ENCODE measurements at regions of chr6 and their contacts with region 1.

Region 1: DNA sequence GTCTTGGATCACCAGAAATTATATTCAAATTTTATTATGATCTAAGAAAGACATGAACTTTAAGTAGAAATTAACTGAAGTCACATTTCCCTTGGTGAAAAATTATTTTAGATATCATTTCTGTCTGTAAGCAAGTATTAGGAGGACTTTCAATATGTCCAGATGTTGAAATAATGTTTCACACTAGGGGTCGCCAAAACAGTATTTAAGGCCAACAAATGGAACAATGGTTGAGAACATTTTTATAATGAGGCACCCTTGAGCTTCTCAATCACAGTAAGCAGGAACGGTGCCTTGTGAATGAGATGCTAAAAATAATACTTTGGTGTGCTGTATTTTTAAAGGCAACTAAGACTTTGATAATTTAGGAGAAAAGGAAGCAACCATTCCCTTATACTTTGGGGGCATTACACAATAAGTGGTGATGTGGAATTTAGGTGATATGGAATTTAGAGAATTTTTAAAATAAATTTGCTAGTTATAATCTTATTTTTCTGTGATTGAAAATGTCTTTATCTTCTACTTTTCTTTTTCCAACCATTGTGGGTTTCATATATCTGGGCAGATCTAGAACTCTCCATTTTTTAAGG is 9.6 kb upstream of the SF3B5 start:
- H3K4me3 Mint-ChIP-seq: no peak overlapping the region
- H3K27ac Mint-ChIP-seq: no peak overlapping the region
- H3K4me1 Mint-ChIP-seq: no peaks in the 10 kb centered on the region
- H3K27me3 Mint-ChIP-seq: no peaks in the 10 kb centered on the region

Region 2: GRCh38 chr6:144140867-144141266 is 35.9 kb after region 1 on chr6:
- intact Hi-C with region 1: loop called (anchors 5 kb)
- H3K4me3 Mint-ChIP-seq: no peak overlapping the region
- H3K27ac Mint-ChIP-seq: no peak overlapping the region
- H3K4me1 Mint-ChIP-seq: peaks cover 9% of the 10 kb centered on the region
- H3K27me3 Mint-ChIP-seq: no peaks in the 10 kb centered on the region

Region 3: GRCh38 chr6:144215932-144216667 is 111.1 kb after region 1 on chr6:
- intact Hi-C with region 1: loop called (anchors 1 kb)
- H3K4me3 Mint-ChIP-seq: peak overlapping the region; percentile 87
- H3K27ac Mint-ChIP-seq: peak overlapping the region; percentile 93
- H3K4me1 Mint-ChIP-seq: peaks cover 35% of the 10 kb centered on the region
- H3K27me3 Mint-ChIP-seq: no peaks in the 10 kb centered on the region

Region 4: DNA sequence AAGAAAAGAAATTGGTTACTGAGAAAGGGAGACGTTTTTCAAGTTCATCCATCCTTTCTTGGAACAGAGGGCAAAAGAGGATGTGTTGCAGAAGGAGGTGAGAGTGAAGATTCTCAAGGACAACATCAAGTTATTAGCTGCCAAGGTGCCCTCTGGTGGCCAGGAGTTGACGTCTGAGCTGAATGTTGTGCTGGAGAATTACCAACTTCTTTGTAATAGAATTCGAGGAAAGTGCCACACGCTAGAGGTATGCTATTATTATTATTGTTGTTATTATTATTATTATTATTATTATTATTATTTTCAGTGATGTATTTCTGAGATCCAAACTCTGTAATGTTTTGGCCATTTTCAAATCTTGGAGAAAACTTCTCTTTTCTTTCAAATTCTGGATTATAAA is 377.1 kb after region 1 on chr6:
- intact Hi-C with region 1: loop called (anchors 2 kb)
- H3K4me3 Mint-ChIP-seq: no peak overlapping the region
- H3K27ac Mint-ChIP-seq: no peak overlapping the region
- H3K4me1 Mint-ChIP-seq: no peaks in the 10 kb centered on the region
- H3K27me3 Mint-ChIP-seq: no peaks in the 10 kb centered on the region

Measured in dendritic cell treated with granulocyte-macrophage colony-stimulating factor and Interleukin-4, amounts not matched to agents 40 ng/mL and 50 ng/mL, for 4 days (primary cell).